ENCODE measurements at regions of chr1 and their contacts with region 1.

Region 1: DNA sequence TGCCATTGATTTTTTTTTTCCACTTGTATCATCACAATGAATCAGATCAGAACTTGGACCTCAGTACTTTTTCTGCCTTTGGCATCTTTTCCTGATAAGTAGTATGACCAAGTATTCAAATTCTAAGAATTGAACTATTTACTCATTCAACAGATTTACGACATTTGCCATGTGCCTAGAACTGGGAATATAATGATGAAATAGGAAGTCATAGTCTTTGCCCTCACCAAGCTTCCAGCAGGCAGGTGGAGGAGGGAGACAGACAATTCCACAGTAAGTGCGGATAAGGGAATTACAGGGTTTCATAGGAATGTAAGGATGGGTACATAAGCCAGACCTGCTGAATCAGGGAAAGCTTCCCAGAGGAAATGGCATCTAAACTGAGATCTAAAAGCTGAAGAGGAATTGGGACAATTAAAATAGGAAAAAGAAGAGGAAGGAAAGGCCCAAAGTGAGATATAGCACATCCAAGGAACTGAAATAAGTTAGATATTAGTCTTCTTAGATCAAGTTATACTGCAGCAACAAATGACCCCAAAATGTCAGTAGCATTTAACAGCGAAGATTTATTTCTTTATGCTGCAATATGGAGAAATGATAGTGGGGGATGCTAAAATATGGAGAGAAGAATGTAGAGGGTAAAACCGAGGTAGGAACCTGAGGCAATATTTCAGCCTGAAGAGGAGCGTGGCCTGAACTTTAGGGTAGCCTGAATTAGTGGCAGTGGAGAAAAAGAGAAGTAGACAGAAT is 5.3 kb upstream of the DDX59 start:
- DNase-seq: no peak
- ATAC-seq: no peak
- H3K4me3 ChIP-seq: no peak overlapping the region
- H3K27ac ChIP-seq: peak overlapping the region; percentile 7; the same call in 1 of the 3 replicates
- H3K4me1 ChIP-seq: peaks cover 3 to 16% of the 10 kb centered on the region in 2 experiments; a peak in 4 of 5 replicates
- H3K27me3 ChIP-seq: no peaks in the 10 kb centered on the region
- CTCF ChIP-seq: no peak
- EP300 ChIP-seq: peak; percentile 74; the same call in 1 of the 2 replicates
- POLR2A ChIP-seq: no peak
- RAD21 ChIP-seq: no peak

Region 2: GRCh38 chr1:199394856-199395255 is 1280.2 kb before region 1 on chr1:
- CTCF ChIA-PET with region 1: no interaction called
- POLR2A ChIA-PET with region 1: no interaction called
- in situ Hi-C with region 1: no loop called
- intact Hi-C with region 1: no loop called
- DNase-seq: no peak
- ATAC-seq: no peak
- H3K4me3 ChIP-seq: no peak overlapping the region
- H3K27ac ChIP-seq: no peak overlapping the region
- H3K4me1 ChIP-seq: no peaks in the 10 kb centered on the region
- H3K27me3 ChIP-seq: no peaks in the 10 kb centered on the region
- CTCF ChIP-seq: no peak
- EP300 ChIP-seq: no peak
- POLR2A ChIP-seq: no peak
- RAD21 ChIP-seq: no peak

Region 3: GRCh38 chr1:199944986-199945385 is 730.0 kb before region 1 on chr1:
- CTCF ChIA-PET with region 1: no interaction called
- POLR2A ChIA-PET with region 1: no interaction called
- in situ Hi-C with region 1: no loop called
- intact Hi-C with region 1: loop called (anchors 5 kb)
- DNase-seq: no peak
- ATAC-seq: no peak
- H3K4me3 ChIP-seq: no peak overlapping the region
- H3K27ac ChIP-seq: no peak overlapping the region
- H3K4me1 ChIP-seq: no peaks in the 10 kb centered on the region
- H3K27me3 ChIP-seq: no peaks in the 10 kb centered on the region
- CTCF ChIP-seq: no peak
- EP300 ChIP-seq: no peak
- POLR2A ChIP-seq: no peak
- RAD21 ChIP-seq: no peak

Region 4: GRCh38 chr1:200525090-200525987 is 149.7 kb before region 1 on chr1:
- CTCF ChIA-PET with region 1: no interaction called
- POLR2A ChIA-PET with region 1: no interaction called
- in situ Hi-C with region 1: no loop called
- intact Hi-C with region 1: no loop called
- DNase-seq: no peak
- ATAC-seq: no peak
- H3K4me3 ChIP-seq: no peak overlapping the region
- H3K27ac ChIP-seq: no peak overlapping the region
- H3K4me1 ChIP-seq: no peaks in the 10 kb centered on the region
- H3K27me3 ChIP-seq: peaks cover 30 to 61% of the 10 kb centered on the region in 2 experiments
- CTCF ChIP-seq: no peak
- EP300 ChIP-seq: no peak
- POLR2A ChIP-seq: no peak
- RAD21 ChIP-seq: no peak

Region 5: DNA sequence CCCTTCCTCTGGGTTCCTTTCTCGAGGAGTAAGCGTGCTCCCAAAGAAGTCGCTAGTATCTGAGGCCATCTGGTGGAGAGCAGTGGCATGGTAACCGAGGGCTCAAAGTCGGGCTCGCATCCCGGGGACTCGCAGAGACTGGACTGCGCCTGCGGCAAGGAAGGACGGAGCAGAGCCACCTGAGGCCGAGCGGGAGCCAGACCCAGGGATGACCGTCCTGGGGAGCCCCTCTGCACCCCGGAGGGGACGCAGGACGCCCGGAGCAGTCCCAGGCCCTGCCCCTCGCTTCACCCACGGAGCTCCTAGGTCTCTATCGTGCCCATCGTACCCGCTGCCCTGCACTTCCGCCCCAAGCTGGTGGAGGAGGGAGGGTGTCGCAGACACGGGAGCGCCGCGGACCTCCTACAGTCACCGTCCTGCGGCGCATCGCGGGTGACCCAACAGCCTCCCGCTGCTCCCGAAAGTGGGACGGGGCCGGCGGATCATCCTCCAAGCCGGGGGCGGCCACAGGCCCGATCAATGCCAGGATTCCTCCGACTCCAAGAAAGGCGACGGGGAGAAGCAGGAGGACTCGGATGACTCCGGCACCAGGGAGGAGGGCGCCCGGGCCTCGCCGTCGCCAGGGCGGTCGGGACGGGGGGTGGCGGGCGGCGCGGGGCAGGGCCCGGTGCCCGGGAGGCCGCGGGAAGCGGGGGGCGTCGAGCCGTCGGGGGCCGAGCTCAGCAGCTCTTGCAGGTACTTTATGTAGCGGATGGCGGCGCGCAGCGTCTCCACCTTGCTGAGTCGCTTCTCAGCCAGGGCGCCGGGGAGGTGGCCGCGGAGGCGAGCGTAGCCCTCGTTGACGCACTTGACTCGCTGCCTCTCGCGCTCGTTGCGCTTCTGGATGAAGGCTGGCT is 439.5 kb after region 1 on chr1:
- CTCF ChIA-PET with region 1: no interaction called
- POLR2A ChIA-PET with region 1: no interaction called
- in situ Hi-C with region 1: no loop called
- intact Hi-C with region 1: no loop called
- DNase-seq: peak; percentile 83 to 85 (median 84)
- ATAC-seq: peak; percentile 98
- H3K4me3 ChIP-seq: no peak overlapping the region
- H3K27ac ChIP-seq: no peak overlapping the region
- H3K4me1 ChIP-seq: peaks cover 0 to 7% of the 10 kb centered on the region in 2 experiments; a peak in 2 of 5 replicates
- H3K27me3 ChIP-seq: peaks cover 20 to 51% of the 10 kb centered on the region in 2 experiments; a peak in 4 of 5 replicates
- CTCF ChIP-seq: peak; percentile 85 to 91 (median 90)
- EP300 ChIP-seq: no peak
- POLR2A ChIP-seq: no peak
- RAD21 ChIP-seq: peak; percentile 82 to 93